BJ (cell line): ENCODE measurements at regions of chr1 and their contacts with region 1.

Region 1: DNA sequence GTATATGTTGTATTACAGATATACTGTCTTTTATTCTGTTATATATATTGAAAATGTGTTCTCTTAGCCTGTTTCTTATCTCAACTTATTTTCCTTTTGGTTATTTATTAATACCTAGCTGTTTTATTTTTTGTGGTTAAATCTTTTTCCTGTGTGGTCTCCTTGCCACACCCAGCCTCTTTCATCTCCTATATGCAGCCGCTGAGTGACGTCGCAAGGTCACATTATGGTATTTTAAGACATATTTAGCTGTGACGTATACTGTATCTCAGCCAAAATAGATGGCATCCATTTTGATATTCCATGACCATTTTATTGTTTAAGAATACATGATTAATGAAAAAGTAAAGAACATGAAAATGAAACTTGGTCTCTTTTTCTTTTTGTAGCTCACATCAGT is 29.1 kb downstream of the CENPF start:
- DNase-seq: no peak
- H3K4me3 ChIP-seq: no peak overlapping the region
- H3K27me3 ChIP-seq: no peaks in the 10 kb centered on the region
- CTCF ChIP-seq: no peak

Region 2: GRCh38 chr1:214615871-214616270 is 16.2 kb before region 1 on chr1:
- CTCF ChIA-PET with region 1: interaction called, 17 read pairs
- POLR2A ChIA-PET with region 1: no interaction called
- DNase-seq: no peak
- H3K4me3 ChIP-seq: no peak overlapping the region
- H3K27me3 ChIP-seq: no peaks in the 10 kb centered on the region
- CTCF ChIP-seq: no peak

Region 3: GRCh38 chr1:214688891-214689290 is 56.8 kb after region 1 on chr1:
- CTCF ChIA-PET with region 1: no interaction called
- POLR2A ChIA-PET with region 1: no interaction called
- DNase-seq: peak; percentile 1
- H3K4me3 ChIP-seq: no peak overlapping the region
- H3K27me3 ChIP-seq: no peaks in the 10 kb centered on the region
- CTCF ChIP-seq: no peak